ENCODE measurements at regions of chr10 and their contacts with region 1.

Region 1: GRCh38 chr10:119401671-119402395 is 140.7 kb downstream of the RGS10 start:
- DNase-seq: peak in 1 of 2 donors; percentile 96
- H3K4me3 ChIP-seq: no peak overlapping the region
- H3K27ac ChIP-seq: peak overlapping the region; percentile 65
- H3K4me1 ChIP-seq: peaks cover 54% of the 10 kb centered on the region
- H3K27me3 ChIP-seq: no peaks in the 10 kb centered on the region
- CTCF ChIP-seq: no peak
- POLR2A ChIP-seq: no peak

Region 2: GRCh38 chr10:119281581-119282071 is 120.2 kb before region 1 on chr10:
- intact Hi-C with region 1: loop called (anchors 10 kb)
- DNase-seq: no peak
- H3K4me3 ChIP-seq: no peak overlapping the region
- H3K27ac ChIP-seq: peak overlapping the region; percentile 52
- H3K4me1 ChIP-seq: peaks cover 63% of the 10 kb centered on the region
- H3K27me3 ChIP-seq: no peaks in the 10 kb centered on the region
- CTCF ChIP-seq: no peak
- POLR2A ChIP-seq: no peak

Measured in vagina (tissue), 2 donors.